Motor neuron (in vitro differentiated cells): ENCODE measurements at regions of chr5 and their contacts with region 1.

Region 1: DNA sequence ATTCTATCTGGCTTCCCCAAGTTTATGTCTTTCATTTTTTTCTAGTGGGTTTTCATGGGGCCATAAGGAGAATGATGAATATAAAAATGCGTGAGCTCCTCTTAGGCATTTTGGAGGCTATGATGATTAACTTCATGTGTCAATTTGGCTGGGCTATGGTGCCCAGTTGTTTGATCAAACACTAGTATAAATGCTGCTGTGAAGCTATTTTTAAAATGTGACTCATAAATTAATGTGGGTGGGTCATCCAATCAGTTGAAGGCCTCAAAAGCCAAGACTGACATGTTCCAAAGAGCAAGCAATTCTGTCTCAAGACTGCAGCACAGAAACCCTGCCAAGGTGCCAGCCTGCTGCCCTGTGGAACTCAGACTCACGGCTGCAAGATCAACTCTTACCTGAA is 24.4 kb upstream of the ICE1 start:
- ATAC-seq: peak in 1 of 8 experiments; percentile 10
- H3K4me3 ChIP-seq: no peak overlapping the region
- H3K27ac ChIP-seq: no peak overlapping the region
- H3K4me1 ChIP-seq: no peaks in the 10 kb centered on the region

Region 2: DNA sequence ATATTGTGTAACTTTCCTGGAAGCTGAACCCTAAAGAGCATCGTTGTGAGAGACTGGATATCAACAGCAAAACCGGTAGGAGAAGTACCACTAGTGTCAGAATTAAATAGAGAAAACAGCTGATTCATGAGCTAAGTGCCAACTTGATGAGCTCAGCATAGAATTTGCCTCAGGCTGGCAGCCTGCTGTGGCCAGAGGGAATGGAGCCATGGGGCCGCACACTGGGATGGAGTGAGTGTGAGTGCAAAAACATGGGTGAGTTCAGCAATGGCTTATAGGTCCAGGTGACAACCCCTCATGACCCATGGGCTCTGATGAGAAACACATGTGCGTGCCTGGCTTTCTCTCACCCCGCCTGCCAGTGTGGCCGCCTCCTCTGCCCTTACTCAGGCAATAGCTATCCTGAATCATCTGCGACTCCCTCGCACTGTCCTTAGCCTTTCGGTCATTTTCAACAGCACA is 232.5 kb before region 1 on chr5:
- in situ Hi-C with region 1: loop called in 1 of 9 experiments (anchors 10 kb)
- ATAC-seq: peak in 2 of 8 experiments; percentile 57 to 88
- H3K4me3 ChIP-seq: no peak overlapping the region
- H3K27ac ChIP-seq: no peak overlapping the region
- H3K4me1 ChIP-seq: no peaks in the 10 kb centered on the region

Region 3: GRCh38 chr5:5235685-5236084 is 162.4 kb before region 1 on chr5:
- in situ Hi-C with region 1: no loop called
- ATAC-seq: peak in 1 of 8 experiments; percentile 42
- H3K4me3 ChIP-seq: no peak overlapping the region
- H3K27ac ChIP-seq: no peak overlapping the region
- H3K4me1 ChIP-seq: no peaks in the 10 kb centered on the region

Region 4: GRCh38 chr5:5939759-5940370 is 541.8 kb after region 1 on chr5:
- in situ Hi-C with region 1: no loop called
- ATAC-seq: no peak
- H3K4me3 ChIP-seq: no peak overlapping the region
- H3K27ac ChIP-seq: no peak overlapping the region
- H3K4me1 ChIP-seq: no peaks in the 10 kb centered on the region